ENCODE measurements at regions of chr6 and their contacts with region 1.

Region 1: GRCh38 chr6:3023663-3024483 is 24.2 kb downstream of the NQO2 start:
- DNase-seq: peak; percentile 93 to 98 (median 97)
- H3K4me3 ChIP-seq: peak overlapping the region; percentile 42 to 74 (median 65)
- H3K27ac ChIP-seq: peak overlapping the region; percentile 29 to 81
- H3K4me1 ChIP-seq: peaks cover 10 to 61% (median 42%) of the 10 kb centered on the region in 4 experiments
- H3K27me3 ChIP-seq: no peaks in the 10 kb centered on the region

Region 2: GRCh38 chr6:3013479-3013878 is 10.4 kb before region 1 on chr6:
- CTCF ChIA-PET with region 1: interaction called, 10 read pairs
- POLR2A ChIA-PET with region 1: interaction called, 3 read pairs
- DNase-seq: peak; percentile 24 to 78 (median 76)
- H3K4me3 ChIP-seq: no peak overlapping the region
- H3K27ac ChIP-seq: no peak overlapping the region
- H3K4me1 ChIP-seq: peaks cover 1 to 13% (median 6%) of the 10 kb centered on the region in 4 experiments
- H3K27me3 ChIP-seq: no peaks in the 10 kb centered on the region

Region 3: GRCh38 chr6:3039384-3039783 is 15.5 kb after region 1 on chr6:
- CTCF ChIA-PET with region 1: interaction called, 16 read pairs
- POLR2A ChIA-PET with region 1: no interaction called
- DNase-seq: no peak
- H3K4me3 ChIP-seq: no peak overlapping the region
- H3K27ac ChIP-seq: no peak overlapping the region
- H3K4me1 ChIP-seq: peaks cover 0 to 3% (median under 1%) of the 10 kb centered on the region in 4 experiments
- H3K27me3 ChIP-seq: no peaks in the 10 kb centered on the region

Region 4: GRCh38 chr6:3045369-3045768 is 21.5 kb after region 1 on chr6:
- CTCF ChIA-PET with region 1: interaction called, 11 read pairs
- POLR2A ChIA-PET with region 1: interaction called, 5 read pairs
- DNase-seq: peak in 1 of 3 donors; percentile 3
- H3K4me3 ChIP-seq: no peak overlapping the region
- H3K27ac ChIP-seq: no peak overlapping the region
- H3K4me1 ChIP-seq: peaks cover 0 to 7% (median 1%) of the 10 kb centered on the region in 4 experiments
- H3K27me3 ChIP-seq: no peaks in the 10 kb centered on the region